HEK293 (cell line): ENCODE measurements at regions of chr10 and their contacts with region 1.

Region 1: GRCh38 chr10:100670828-100671479 is 74.4 kb upstream of the PAX2 start:
- H3K4me3 ChIP-seq: no peak overlapping the region; the same call in 1 of the 2 replicates
- H3K27ac ChIP-seq: no peak overlapping the region
- H3K4me1 ChIP-seq: no peaks in the 10 kb centered on the region
- CTCF ChIP-seq: no peak

Region 2: GRCh38 chr10:100728928-100729861 is 58.2 kb after region 1 on chr10:
- CTCF ChIA-PET with region 1: interaction called, 17 read pairs
- POLR2A ChIA-PET with region 1: no interaction called
- H3K4me3 ChIP-seq: peak overlapping the region; percentile 23
- H3K27ac ChIP-seq: no peak overlapping the region
- H3K4me1 ChIP-seq: peaks cover 5% of the 10 kb centered on the region; the same call in 1 of the 2 replicates
- CTCF ChIP-seq: peak; percentile 81